ENCODE measurements at regions of chr3 and their contacts with region 1.

Region 1: GRCh38 chr3:103712320-103713008 is 1277.6 kb downstream of the ZPLD1 start:
- DNase-seq: no peak
- H3K4me3 ChIP-seq: no peak overlapping the region
- H3K27ac ChIP-seq: no peak overlapping the region
- H3K4me1 ChIP-seq: no peaks in the 10 kb centered on the region
- H3K27me3 ChIP-seq: no peaks in the 10 kb centered on the region
- CTCF ChIP-seq: no peak

Region 2: DNA sequence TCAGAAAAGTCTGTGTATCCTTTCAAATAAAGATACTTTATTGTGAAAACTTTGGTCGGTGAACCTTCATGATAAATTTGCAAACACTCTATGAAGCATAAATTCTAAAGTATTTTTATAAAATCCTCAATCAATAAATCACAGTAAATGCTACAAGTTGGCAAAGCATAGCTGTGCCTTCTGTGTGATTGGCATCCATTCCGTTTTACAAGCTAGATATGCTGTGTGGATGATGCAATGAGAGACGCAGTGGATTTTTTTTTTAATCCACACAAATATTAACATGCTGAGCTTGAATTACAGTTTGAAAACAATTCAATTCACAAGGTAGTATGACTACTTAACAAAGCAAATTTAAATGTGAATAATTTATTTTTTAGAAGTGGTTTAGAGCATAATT is 340.4 kb before region 1 on chr3:
- CTCF ChIA-PET with region 1: no interaction called
- POLR2A ChIA-PET with region 1: interaction called, 10 read pairs
- intact Hi-C with region 1: no loop called
- DNase-seq: no peak
- H3K4me3 ChIP-seq: no peak overlapping the region
- H3K27ac ChIP-seq: no peak overlapping the region
- H3K4me1 ChIP-seq: no peaks in the 10 kb centered on the region
- H3K27me3 ChIP-seq: no peaks in the 10 kb centered on the region
- CTCF ChIP-seq: no peak

Region 3: GRCh38 chr3:103765006-103765405 is 52.5 kb after region 1 on chr3:
- CTCF ChIA-PET with region 1: no interaction called
- POLR2A ChIA-PET with region 1: no interaction called
- intact Hi-C with region 1: no loop called
- DNase-seq: peak in 1 of 2 experiments; percentile 20
- H3K4me3 ChIP-seq: no peak overlapping the region
- H3K27ac ChIP-seq: no peak overlapping the region
- H3K4me1 ChIP-seq: no peaks in the 10 kb centered on the region
- H3K27me3 ChIP-seq: no peaks in the 10 kb centered on the region
- CTCF ChIP-seq: no peak